GM10248 (cell line): ENCODE measurements at regions of chr17 and their contacts with region 1.

Region 1: GRCh38 chr17:4789901-4790704 is 1.3 kb downstream of the GLTPD2 start:
- DNase-seq: peak; percentile 93
- CTCF ChIP-seq: peak; percentile 68

Region 2: GRCh38 chr17:4607773-4608187 is 182.3 kb before region 1 on chr17:
- CTCF ChIA-PET with region 1: no interaction called
- POLR2A ChIA-PET with region 1: no interaction called
- DNase-seq: no peak
- CTCF ChIP-seq: no peak

Region 3: GRCh38 chr17:4733073-4733531 is 57.0 kb before region 1 on chr17:
- CTCF ChIA-PET with region 1: interaction called, 13 read pairs
- POLR2A ChIA-PET with region 1: interaction called, 10 read pairs
- DNase-seq: peak; percentile 75
- CTCF ChIP-seq: peak; percentile 34

Region 4: GRCh38 chr17:4777969-4778761 is 11.9 kb before region 1 on chr17:
- CTCF ChIA-PET with region 1: interaction called, 21 read pairs
- POLR2A ChIA-PET with region 1: no interaction called
- DNase-seq: no peak
- CTCF ChIP-seq: no peak

Region 5: DNA sequence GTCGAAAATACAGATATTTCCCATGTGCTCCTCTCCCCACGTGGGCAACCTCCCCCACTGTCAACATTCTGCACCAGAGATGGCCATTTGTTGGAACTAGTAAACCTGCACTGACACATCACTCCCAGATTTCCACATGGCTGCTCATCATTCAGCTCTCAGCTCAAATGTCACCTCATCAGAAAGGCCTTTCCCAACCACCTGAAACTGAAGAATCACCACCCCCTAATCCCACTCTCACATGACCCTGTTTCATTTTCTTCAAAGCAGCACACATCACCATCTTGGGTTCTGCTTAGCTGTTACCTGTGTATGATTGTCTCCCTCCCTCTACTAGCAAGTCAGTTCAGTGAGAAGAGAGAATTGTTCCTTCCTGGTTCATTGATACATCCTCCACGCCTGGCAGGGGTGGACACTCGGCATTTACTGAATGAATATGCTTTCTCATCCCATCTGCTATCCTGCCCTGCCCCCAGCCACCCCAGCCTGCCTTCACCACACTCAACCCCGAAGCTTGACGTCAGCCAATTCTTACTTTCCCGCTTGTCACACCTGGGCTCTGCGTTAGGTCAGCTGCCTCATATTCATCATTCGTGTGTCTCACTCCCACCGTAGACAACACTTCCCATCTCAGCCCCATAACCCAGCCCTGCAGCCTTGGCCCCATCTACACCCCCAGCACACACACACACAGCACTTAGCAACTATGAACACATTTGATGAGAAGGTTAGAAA is 10.5 kb after region 1 on chr17:
- CTCF ChIA-PET with region 1: interaction called, 20 read pairs
- POLR2A ChIA-PET with region 1: no interaction called
- DNase-seq: no peak
- CTCF ChIP-seq: no peak

Region 6: GRCh38 chr17:4806777-4807604 is 16.9 kb after region 1 on chr17 and contains the start of gene PLD2:
- CTCF ChIA-PET with region 1: interaction called, 20 read pairs
- POLR2A ChIA-PET with region 1: interaction called, 4 read pairs
- DNase-seq: peak; percentile 100
- CTCF ChIP-seq: no peak

Region 7: DNA sequence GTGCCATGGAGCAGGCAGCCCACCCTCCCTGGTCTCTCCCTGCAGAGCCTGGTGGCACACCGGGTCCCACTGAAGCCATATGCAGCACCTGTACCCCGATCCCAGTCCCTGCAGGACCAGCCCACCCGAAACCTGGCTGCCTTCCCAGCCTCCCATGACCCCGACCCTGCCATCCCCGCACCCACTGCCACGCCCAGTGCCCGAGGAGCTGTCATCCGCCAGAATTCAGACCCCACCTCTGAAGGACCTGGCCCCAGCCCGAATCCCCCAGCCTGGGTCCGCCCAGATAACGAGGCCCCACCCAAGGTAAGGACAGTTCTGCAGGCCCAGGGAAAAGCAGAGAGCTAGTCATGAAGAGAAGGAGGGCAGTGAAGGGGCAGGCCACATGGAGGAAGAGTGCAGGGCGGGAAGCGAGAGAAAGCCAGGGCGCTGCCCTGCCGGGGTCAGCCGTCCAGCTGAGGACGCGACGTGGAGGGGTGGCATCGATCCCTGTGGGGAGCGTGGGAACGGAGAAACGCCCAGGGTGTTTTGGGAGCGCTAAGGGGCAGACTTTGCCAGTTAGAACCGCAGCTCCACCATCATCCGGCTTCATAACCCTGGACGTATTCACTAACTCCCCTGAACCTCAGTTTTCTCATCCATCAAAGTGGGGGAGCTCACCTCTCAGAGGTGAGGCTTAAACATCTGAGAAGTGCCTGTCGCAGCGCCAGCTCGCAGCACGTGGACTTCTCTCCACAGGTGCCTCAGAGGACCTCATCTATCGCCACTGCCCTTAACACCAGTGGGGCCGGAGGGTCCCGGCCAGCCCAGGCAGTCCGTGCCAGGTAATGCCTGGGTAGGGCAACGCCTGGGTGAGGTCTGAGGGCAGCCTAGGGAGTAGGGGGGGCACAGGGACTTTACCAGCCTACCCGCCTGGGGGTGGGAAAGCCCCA is 101.6 kb after region 1 on chr17:
- CTCF ChIA-PET with region 1: interaction called, 14 read pairs
- POLR2A ChIA-PET with region 1: no interaction called
- DNase-seq: no peak
- CTCF ChIP-seq: no peak